Heart right ventricle (tissue), 16 donors: ENCODE measurements at regions of chr4 and their contacts with region 1.

Region 1: GRCh38 chr4:55345980-55346850 is at the start of gene SRD5A3:
- DNase-seq: peak; percentile 85 to 91
- ATAC-seq: peak; percentile 96 to 99 (median 97)
- H3K4me3 ChIP-seq: peak within 1 kb of the TSS; percentile 39 to 91 (median 82)
- H3K27ac ChIP-seq: peak within 1 kb of the TSS; percentile 95 to 99 (median 96)
- H3K4me1 ChIP-seq: peaks cover 5 to 29% (median 15%) of the 10 kb centered on the region in 9 donors
- H3K27me3 ChIP-seq: no peaks in the 10 kb centered on the region
- CTCF ChIP-seq: peak; percentile 89 to 98 (median 96)
- total RNA-seq, gene SRD5A3: 4.4 to 14.6 (median 7.7) TPM

Region 2: DNA sequence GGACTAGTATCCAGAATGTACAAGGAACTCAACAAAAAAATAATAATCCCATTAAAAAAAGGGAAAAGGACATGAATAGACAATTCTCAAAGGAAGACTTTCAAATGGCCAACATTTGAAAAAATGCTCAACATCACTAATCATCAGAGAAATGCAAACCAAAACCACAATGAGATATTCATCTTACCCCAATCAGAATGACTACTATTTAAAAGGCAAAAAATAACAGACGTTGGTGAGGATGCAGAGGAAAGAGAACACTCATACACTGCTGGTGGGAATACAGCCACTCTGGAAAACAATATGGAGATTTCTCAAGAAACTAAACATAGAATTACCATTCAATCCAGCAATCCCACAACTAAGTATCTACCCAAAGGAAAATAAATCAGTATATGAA is 353.9 kb before region 1 on chr4:
- intact Hi-C with region 1: no loop called
- DNase-seq: no peak
- ATAC-seq: no peak
- H3K4me3 ChIP-seq: no peak overlapping the region
- H3K27ac ChIP-seq: no peak overlapping the region
- H3K4me1 ChIP-seq: no peaks in the 10 kb centered on the region
- H3K27me3 ChIP-seq: no peaks in the 10 kb centered on the region
- CTCF ChIP-seq: no peak

Region 3: DNA sequence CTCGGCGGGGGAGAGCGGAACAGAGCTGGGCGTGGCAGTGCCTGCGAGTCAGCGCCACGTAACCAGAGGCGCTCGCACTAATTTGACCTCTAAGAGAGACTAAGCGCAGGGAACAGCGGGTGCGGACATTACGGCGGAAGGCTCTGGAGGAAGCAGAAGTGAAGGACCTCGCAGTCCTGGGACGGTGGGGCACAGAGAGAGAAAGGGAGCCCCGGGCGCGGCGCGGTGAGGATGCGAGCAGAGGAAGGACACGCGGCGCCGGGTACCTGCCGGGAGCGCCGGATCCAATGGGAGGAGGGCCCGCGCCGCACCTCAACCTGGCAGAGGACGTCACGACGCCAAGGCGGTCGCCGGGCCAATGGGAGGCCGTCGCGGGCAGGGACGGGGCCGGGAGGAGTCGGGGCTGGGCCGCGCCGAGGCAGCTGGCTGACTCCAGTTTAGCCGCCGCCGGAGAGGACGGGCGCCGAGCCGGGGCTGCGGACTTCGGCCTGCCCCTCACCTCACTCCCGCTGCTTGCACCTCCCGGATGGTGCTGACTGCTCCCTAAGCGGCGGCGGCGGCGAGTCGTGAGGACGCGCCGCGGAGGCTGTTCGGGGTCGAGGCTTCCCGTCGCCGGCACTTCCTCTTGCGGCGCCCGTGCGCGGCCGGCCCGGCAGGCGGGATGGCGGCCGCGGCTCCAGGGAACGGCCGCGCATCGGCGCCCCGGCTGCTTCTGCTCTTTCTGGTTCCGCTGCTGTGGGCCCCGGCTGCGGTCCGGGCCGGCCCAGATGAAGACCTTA is 49.5 kb after region 1 on chr4 and contains the start of gene TMEM165:
- intact Hi-C with region 1: loop called in 8 of 10 experiments (anchors 1 to 5 kb)
- DNase-seq: peak; percentile 91
- ATAC-seq: peak; percentile 96 to 99 (median 97)
- H3K4me3 ChIP-seq: peak within 1 kb of the TSS; percentile 62 to 99 (median 90)
- H3K27ac ChIP-seq: peak within 1 kb of the TSS; percentile 91 to 100 (median 98)
- H3K4me1 ChIP-seq: peaks cover 0 to 40% (median 33%) of the 10 kb centered on the region in 9 donors
- H3K27me3 ChIP-seq: no peaks in the 10 kb centered on the region
- CTCF ChIP-seq: no peak
- total RNA-seq, gene TMEM165: 30.3 to 86.3 (median 34.6) TPM

Region 4: GRCh38 chr4:55409468-55410171 is 63.4 kb after region 1 on chr4:
- intact Hi-C with region 1: loop called in 1 of 10 experiments (anchors 5 kb)
- DNase-seq: peak in 1 of 2 donors; percentile 57
- ATAC-seq: peak; percentile 53 to 85 (median 72)
- H3K4me3 ChIP-seq: peak overlapping the region in 1 of 10 donors; percentile 15
- H3K27ac ChIP-seq: peak overlapping the region in 7 of 10 donors; percentile 3 to 57 (median 6)
- H3K4me1 ChIP-seq: peaks cover 0 to 66% (median 32%) of the 10 kb centered on the region in 9 donors
- H3K27me3 ChIP-seq: no peaks in the 10 kb centered on the region
- CTCF ChIP-seq: peak in 8 of 9 donors; percentile 13 to 64 (median 34)

Region 5: DNA sequence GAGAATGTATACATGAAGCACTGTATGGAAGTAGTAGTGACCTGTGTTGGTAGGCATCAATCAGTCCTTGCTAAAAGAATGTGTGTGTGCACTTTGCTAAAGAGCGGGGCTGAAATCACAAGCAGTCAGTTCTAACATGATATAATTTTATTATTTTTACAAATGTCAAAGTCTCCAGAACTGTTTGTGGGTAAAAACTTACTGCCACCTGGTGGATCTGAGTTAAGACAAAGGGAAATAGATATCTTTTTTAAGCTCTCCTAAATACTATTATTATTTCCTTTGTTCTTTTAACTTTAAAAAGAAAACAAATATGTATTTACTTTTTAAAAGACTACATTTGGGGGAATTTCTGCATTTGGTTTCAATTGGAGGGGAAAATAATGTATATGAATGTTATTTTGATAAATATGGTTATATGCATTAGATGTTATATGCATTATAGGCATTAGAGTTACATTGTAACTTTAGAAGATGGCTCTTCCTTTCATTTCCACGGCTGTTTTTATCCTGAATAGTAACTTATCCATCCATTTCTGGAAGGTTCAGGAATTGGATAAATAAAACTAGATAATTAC is 208.3 kb after region 1 on chr4:
- intact Hi-C with region 1: loop called in 9 of 10 experiments (anchors 5 kb)
- DNase-seq: no peak
- ATAC-seq: peak in 2 of 8 donors; percentile 39 to 48
- H3K4me3 ChIP-seq: no peak overlapping the region
- H3K27ac ChIP-seq: no peak overlapping the region
- H3K4me1 ChIP-seq: peaks cover 0 to 4% (median 0%) of the 10 kb centered on the region in 9 donors
- H3K27me3 ChIP-seq: peaks cover 0 to 3% (median 0%) of the 10 kb centered on the region in 7 donors
- CTCF ChIP-seq: peak; percentile 10 to 66 (median 51)

Region 6: DNA sequence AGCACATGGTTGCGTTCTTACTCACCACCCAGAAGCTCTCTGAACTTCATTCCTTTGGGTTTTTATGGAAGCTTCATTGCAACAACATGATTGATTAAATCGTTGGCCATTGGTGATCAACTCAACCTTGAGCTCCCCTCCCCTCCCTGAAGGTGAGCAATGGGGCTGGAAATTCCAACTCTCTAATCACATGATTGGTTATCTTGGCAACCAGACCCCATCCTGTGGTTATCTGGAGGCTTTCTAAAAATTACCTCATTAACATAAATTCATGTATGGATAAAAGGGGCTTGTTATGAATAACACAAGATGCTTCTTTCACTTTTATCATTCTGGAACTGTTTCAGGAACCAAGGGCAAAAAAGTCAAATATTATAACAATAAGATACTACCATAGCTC is 324.5 kb after region 1 on chr4:
- intact Hi-C with region 1: no loop called
- DNase-seq: no peak
- ATAC-seq: no peak
- H3K4me3 ChIP-seq: no peak overlapping the region
- H3K27ac ChIP-seq: no peak overlapping the region
- H3K4me1 ChIP-seq: no peaks in the 10 kb centered on the region
- H3K27me3 ChIP-seq: peaks cover 0 to 13% (median 3%) of the 10 kb centered on the region in 7 donors
- CTCF ChIP-seq: no peak

Region 7: GRCh38 chr4:55736605-55737183 is 390.5 kb after region 1 on chr4:
- intact Hi-C with region 1: loop called in 1 of 10 experiments (anchors 10 kb)
- DNase-seq: no peak
- ATAC-seq: no peak
- H3K4me3 ChIP-seq: no peak overlapping the region
- H3K27ac ChIP-seq: no peak overlapping the region
- H3K4me1 ChIP-seq: no peaks in the 10 kb centered on the region
- H3K27me3 ChIP-seq: peaks cover 0 to 30% (median 10%) of the 10 kb centered on the region in 7 donors
- CTCF ChIP-seq: peak in 7 of 9 donors; percentile 28 to 52 (median 45)

Region 8: GRCh38 chr4:55853484-55854046 is 507.4 kb after region 1 on chr4 and contains the start of gene EXOC1:
- intact Hi-C with region 1: loop called in 2 of 10 experiments (anchors 5 to 10 kb)
- DNase-seq: peak; percentile 99
- ATAC-seq: peak; percentile 99 to 100 (median 100)
- H3K4me3 ChIP-seq: peak within 1 kb of the TSS; percentile 82 to 98 (median 95)
- H3K27ac ChIP-seq: peak within 1 kb of the TSS; percentile 72 to 95 (median 90)
- H3K4me1 ChIP-seq: peaks cover 0 to 28% (median 21%) of the 10 kb centered on the region in 9 donors
- H3K27me3 ChIP-seq: peaks cover 0 to 5% (median 0%) of the 10 kb centered on the region in 7 donors
- CTCF ChIP-seq: no peak
- total RNA-seq, gene EXOC1: 16.0 to 26.3 (median 21.5) TPM

Region 9: GRCh38 chr4:55866973-55867574 is 520.9 kb after region 1 on chr4:
- intact Hi-C with region 1: loop called in 3 of 10 experiments (anchors 5 to 10 kb)
- DNase-seq: peak in 1 of 2 donors; percentile 8
- ATAC-seq: peak; percentile 64 to 96 (median 90)
- H3K4me3 ChIP-seq: no peak overlapping the region
- H3K27ac ChIP-seq: peak overlapping the region in 6 of 10 donors; percentile 36 to 77 (median 61)
- H3K4me1 ChIP-seq: peaks cover 0 to 27% (median 20%) of the 10 kb centered on the region in 9 donors
- H3K27me3 ChIP-seq: no peaks in the 10 kb centered on the region
- CTCF ChIP-seq: peak; percentile 65 to 95 (median 88)